Activated CD4-positive, alpha-beta T cell treated with anti-CD3 and anti-CD28 coated beads for 36 hours (primary cell): ENCODE measurements at regions of chr5 and their contacts with region 1.

Region 1: DNA sequence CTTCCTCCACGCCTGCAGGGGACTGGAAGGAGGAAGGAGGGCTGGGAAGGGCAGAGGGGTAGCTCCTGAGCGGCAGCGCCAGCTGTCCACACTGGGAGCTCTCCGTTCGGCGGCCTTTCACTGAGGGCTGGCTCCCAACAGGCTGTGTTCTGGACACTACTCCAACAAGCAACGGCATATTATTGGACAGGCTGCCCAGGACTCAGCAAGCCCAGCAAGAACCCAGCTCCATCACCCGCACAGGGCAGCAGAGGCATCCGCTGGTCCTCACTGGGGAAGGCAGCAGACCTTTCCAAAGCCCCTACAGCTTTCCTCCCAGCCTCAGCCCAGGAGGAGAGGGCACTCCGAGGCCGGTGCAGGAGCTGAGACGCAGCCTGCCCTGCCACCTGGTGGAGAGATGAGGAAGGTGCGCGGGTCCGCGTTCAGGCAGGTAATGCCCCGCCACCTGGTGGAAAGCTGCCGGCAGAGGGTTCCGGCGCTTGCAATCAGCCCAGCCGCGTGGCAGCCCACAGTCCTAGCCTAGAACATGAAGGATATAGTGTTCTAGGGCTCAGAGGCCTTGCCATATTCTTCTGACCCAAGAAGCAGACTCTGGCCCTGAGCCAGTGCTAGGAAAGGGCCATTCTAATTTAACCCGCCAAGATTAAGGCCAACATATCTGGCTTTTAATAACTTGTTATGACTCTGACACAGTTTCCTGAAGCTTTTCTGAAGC is 74.4 kb downstream of the NRG2 start:
- DNase-seq: peak; percentile 95
- ATAC-seq: peak; percentile 100
- H3K4me3 Mint-ChIP-seq: no peak overlapping the region
- H3K27ac Mint-ChIP-seq: no peak overlapping the region
- H3K4me1 Mint-ChIP-seq: no peaks in the 10 kb centered on the region
- H3K27me3 Mint-ChIP-seq: peaks cover 17% of the 10 kb centered on the region

Region 2: DNA sequence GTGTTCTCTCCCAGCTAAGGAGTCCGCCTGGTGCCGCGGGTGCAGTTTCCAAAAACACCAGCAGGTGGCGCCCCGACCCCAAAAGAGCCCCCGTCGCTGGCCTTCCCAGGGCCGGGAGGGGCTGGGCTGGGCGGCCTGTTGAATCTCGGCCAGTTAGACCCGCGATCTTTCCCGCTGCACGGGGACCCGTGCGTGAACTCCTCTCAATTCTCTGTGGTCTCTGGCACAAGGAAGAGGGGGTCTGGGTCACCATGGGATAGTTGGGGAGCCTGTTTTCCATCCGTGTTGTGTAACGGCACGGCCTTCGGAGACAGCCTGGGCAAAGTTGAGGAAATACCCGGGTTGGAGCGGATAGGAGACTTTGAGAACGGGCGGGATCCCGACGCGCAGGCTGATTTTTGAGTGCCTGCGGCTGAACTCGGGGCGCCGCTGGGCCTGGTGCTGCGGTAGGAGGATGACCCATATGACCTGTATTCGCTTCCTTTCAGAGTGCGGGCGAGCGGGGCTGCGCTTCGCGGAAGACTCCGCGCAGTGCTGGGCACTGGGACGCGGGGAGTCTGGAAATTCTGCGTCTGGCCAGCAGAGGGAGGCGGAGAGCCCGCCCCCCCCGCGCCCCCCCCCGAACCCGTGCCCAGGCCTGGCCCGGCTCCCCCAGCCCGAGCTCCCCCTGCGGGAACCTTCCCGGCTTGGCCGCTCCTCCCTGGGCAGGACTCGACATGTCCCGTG is 181.0 kb before region 1 on chr5:
- CTCF ChIA-PET with region 1: interaction called, 186 read pairs
- POLR2A ChIA-PET with region 1: no interaction called
- intact Hi-C with region 1: loop called (anchors 1 kb)
- DNase-seq: peak; percentile 92
- ATAC-seq: peak; percentile 91
- H3K4me3 Mint-ChIP-seq: peak overlapping the region; percentile 73
- H3K27ac Mint-ChIP-seq: no peak overlapping the region
- H3K4me1 Mint-ChIP-seq: peaks cover 3% of the 10 kb centered on the region
- H3K27me3 Mint-ChIP-seq: peaks cover 17% of the 10 kb centered on the region

Region 3: GRCh38 chr5:139844472-139845145 is 124.1 kb before region 1 on chr5:
- CTCF ChIA-PET with region 1: interaction called, 15 read pairs
- POLR2A ChIA-PET with region 1: no interaction called
- intact Hi-C with region 1: loop called (anchors 1 to 10 kb)
- DNase-seq: peak; percentile 88
- ATAC-seq: peak; percentile 47
- H3K4me3 Mint-ChIP-seq: no peak overlapping the region
- H3K27ac Mint-ChIP-seq: no peak overlapping the region
- H3K4me1 Mint-ChIP-seq: peaks cover 7% of the 10 kb centered on the region
- H3K27me3 Mint-ChIP-seq: peaks cover 24% of the 10 kb centered on the region

Region 4: GRCh38 chr5:139914218-139914807 is 54.4 kb before region 1 on chr5:
- CTCF ChIA-PET with region 1: interaction called, 17 read pairs
- POLR2A ChIA-PET with region 1: no interaction called
- intact Hi-C with region 1: no loop called
- DNase-seq: no peak
- ATAC-seq: no peak
- H3K4me3 Mint-ChIP-seq: no peak overlapping the region
- H3K27ac Mint-ChIP-seq: no peak overlapping the region
- H3K4me1 Mint-ChIP-seq: no peaks in the 10 kb centered on the region
- H3K27me3 Mint-ChIP-seq: peaks cover 9% of the 10 kb centered on the region

Region 5: DNA sequence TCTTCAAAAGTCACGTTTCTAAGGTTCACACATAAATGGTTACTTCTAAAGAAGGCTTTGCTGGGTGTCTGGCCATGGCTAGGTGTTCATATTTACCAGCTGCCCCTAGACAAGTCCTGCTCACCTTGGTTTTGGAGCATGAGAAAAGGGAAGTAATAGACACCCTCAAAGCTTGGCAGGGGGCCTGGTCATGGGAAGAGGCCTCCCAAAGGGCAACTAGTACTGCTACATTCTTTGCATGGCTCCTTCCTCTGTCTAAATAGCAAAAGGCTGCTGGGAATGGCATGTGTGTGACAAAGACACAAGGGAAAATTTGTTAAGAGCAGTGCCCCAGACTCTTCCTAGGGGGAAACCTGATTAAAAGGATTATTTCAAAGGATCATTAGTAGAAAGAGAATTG is 19.0 kb before region 1 on chr5:
- CTCF ChIA-PET with region 1: interaction called, 45 read pairs
- POLR2A ChIA-PET with region 1: no interaction called
- intact Hi-C with region 1: no loop called
- DNase-seq: no peak
- ATAC-seq: no peak
- H3K4me3 Mint-ChIP-seq: no peak overlapping the region
- H3K27ac Mint-ChIP-seq: no peak overlapping the region
- H3K4me1 Mint-ChIP-seq: no peaks in the 10 kb centered on the region
- H3K27me3 Mint-ChIP-seq: peaks cover 33% of the 10 kb centered on the region

Region 6: DNA sequence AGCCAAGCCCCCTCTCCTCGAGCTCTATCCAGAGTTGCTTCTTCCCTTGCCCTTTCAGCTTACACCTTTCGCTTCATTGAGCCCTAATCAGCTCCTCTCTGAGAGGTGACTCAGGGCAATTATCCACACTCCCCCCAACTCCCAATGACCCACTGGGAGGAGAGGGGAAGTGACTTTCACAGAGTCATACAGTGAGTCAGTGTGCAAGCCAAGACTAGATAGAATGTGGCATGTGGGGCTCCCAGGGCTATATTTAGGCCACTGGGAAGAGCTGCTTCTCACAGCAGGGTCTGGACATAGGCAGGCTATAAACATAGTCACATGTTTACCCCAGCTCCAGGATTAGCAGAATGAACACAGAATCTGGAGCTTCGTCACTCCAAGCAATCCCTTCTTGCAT is 17.0 kb after region 1 on chr5:
- CTCF ChIA-PET with region 1: interaction called, 39 read pairs
- POLR2A ChIA-PET with region 1: interaction called, 3 read pairs
- intact Hi-C with region 1: no loop called
- DNase-seq: no peak
- ATAC-seq: no peak
- H3K4me3 Mint-ChIP-seq: no peak overlapping the region
- H3K27ac Mint-ChIP-seq: no peak overlapping the region
- H3K4me1 Mint-ChIP-seq: no peaks in the 10 kb centered on the region
- H3K27me3 Mint-ChIP-seq: peaks cover 11% of the 10 kb centered on the region

Region 7: GRCh38 chr5:140157032-140157803 is 188.5 kb after region 1 on chr5:
- CTCF ChIA-PET with region 1: interaction called, 16 read pairs
- POLR2A ChIA-PET with region 1: no interaction called
- intact Hi-C with region 1: loop called in 1 of 2 experiments (anchors 1 kb)
- DNase-seq: peak; percentile 94
- ATAC-seq: peak; percentile 99
- H3K4me3 Mint-ChIP-seq: peak overlapping the region; percentile 22
- H3K27ac Mint-ChIP-seq: peak overlapping the region; percentile 49
- H3K4me1 Mint-ChIP-seq: peaks cover 5% of the 10 kb centered on the region
- H3K27me3 Mint-ChIP-seq: no peaks in the 10 kb centered on the region

Region 8: DNA sequence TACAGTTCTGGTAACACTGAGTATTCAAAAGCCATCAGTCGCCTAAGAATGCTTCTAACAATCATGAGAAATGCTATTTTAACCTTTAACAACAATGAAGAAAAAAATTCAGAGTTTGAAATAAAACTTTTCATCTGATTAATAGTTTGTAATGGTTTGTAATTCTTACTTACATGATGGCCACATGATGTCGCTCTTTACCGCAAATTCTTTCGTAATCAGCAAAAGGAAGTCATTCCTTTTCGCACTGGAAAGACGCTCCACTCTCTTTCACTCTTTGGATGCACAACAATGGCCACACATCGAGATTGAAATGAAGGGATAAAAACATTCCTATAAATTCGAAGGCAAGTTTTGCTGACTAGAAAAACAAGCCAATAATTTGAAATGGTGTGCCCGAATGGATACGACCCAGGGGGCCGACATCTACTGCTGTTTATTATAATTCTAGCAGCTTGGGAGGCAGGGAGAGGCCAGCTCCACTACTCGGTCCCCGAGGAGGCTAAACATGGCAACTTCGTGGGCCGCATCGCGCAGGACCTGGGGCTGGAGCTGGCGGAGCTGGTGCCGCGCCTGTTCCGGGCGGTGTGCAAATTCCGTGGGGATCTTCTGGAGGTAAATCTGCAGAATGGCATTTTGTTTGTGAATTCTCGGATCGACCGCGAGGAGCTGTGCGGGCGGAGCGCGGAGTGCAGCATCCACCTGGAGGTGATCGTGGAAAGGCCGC is 865.5 kb after region 1 on chr5 and contains the start of gene PCDHA7:
- CTCF ChIA-PET with region 1: no interaction called
- POLR2A ChIA-PET with region 1: no interaction called
- intact Hi-C with region 1: no loop called
- DNase-seq: no peak
- ATAC-seq: no peak
- H3K4me3 Mint-ChIP-seq: no peak within 1 kb of the TSS
- H3K27ac Mint-ChIP-seq: no peak within 1 kb of the TSS
- H3K4me1 Mint-ChIP-seq: no peaks in the 10 kb centered on the region
- H3K27me3 Mint-ChIP-seq: peaks cover 27% of the 10 kb centered on the region
- total RNA-seq, gene PCDHA7: not detected